OCI-LY7 (cell line): ENCODE measurements at regions of chr19 and their contacts with region 1.

Region 1: GRCh38 chr19:45079063-45079910 is at the start of gene GEMIN7:
- DNase-seq: peak; percentile 90
- H3K4me3 ChIP-seq: peak within 1 kb of the TSS; percentile 97
- H3K27ac ChIP-seq: peak within 1 kb of the TSS; percentile 88
- H3K4me1 ChIP-seq: peaks cover 43% of the 10 kb centered on the region
- CTCF ChIP-seq: no peak
- total RNA-seq, gene GEMIN7: 45.2 and 60.0 TPM in 2 replicates

Region 2: GRCh38 chr19:44752816-44753618 is 326.3 kb before region 1 on chr19:
- CTCF ChIA-PET with region 1: no interaction called
- POLR2A ChIA-PET with region 1: no interaction called
- intact Hi-C with region 1: loop called (anchors 5 kb)
- DNase-seq: peak; percentile 96
- H3K4me3 ChIP-seq: peak overlapping the region; percentile 84
- H3K27ac ChIP-seq: peak overlapping the region; percentile 95
- H3K4me1 ChIP-seq: peaks cover 60% of the 10 kb centered on the region
- CTCF ChIP-seq: 0 out of 2 replicates have a peak, but pooled peaks have one; percentile 20

Region 3: GRCh38 chr19:44968118-44968517 is 111.2 kb before region 1 on chr19:
- CTCF ChIA-PET with region 1: no interaction called
- POLR2A ChIA-PET with region 1: no interaction called
- intact Hi-C with region 1: no loop called
- DNase-seq: no peak
- H3K4me3 ChIP-seq: no peak overlapping the region
- H3K27ac ChIP-seq: no peak overlapping the region
- H3K4me1 ChIP-seq: no peaks in the 10 kb centered on the region
- CTCF ChIP-seq: no peak

Region 4: GRCh38 chr19:45001087-45001739 is 78.1 kb before region 1 on chr19 and contains the start of gene RELB:
- CTCF ChIA-PET with region 1: no interaction called
- POLR2A ChIA-PET with region 1: no interaction called
- intact Hi-C with region 1: loop called (anchors 5 kb)
- DNase-seq: peak; percentile 95
- H3K4me3 ChIP-seq: peak within 1 kb of the TSS; percentile 94
- H3K27ac ChIP-seq: peak within 1 kb of the TSS; percentile 96
- H3K4me1 ChIP-seq: peaks cover 67% of the 10 kb centered on the region
- CTCF ChIP-seq: no peak
- total RNA-seq, gene RELB: 36.4 and 36.9 TPM in 2 replicates

Region 5: GRCh38 chr19:45125926-45126493 is 46.7 kb after region 1 on chr19:
- CTCF ChIA-PET with region 1: no interaction called
- POLR2A ChIA-PET with region 1: no interaction called
- intact Hi-C with region 1: loop called (anchors 1 kb)
- DNase-seq: peak; percentile 74
- H3K4me3 ChIP-seq: no peak overlapping the region
- H3K27ac ChIP-seq: no peak overlapping the region
- H3K4me1 ChIP-seq: peaks cover 45% of the 10 kb centered on the region
- CTCF ChIP-seq: peak; percentile 85

Region 6: GRCh38 chr19:45137179-45137761 is 58.0 kb after region 1 on chr19:
- CTCF ChIA-PET with region 1: no interaction called
- POLR2A ChIA-PET with region 1: no interaction called
- intact Hi-C with region 1: loop called (anchors 2 kb)
- DNase-seq: peak; percentile 95
- H3K4me3 ChIP-seq: peak overlapping the region; percentile 61
- H3K27ac ChIP-seq: peak overlapping the region; percentile 98
- H3K4me1 ChIP-seq: peaks cover 70% of the 10 kb centered on the region
- CTCF ChIP-seq: no peak

Region 7: GRCh38 chr19:45178262-45179071 is 99.2 kb after region 1 on chr19 and contains the start of gene BLOC1S3:
- CTCF ChIA-PET with region 1: no interaction called
- POLR2A ChIA-PET with region 1: no interaction called
- intact Hi-C with region 1: loop called (anchors 1 kb)
- DNase-seq: peak; percentile 100
- H3K4me3 ChIP-seq: peak within 1 kb of the TSS; percentile 88
- H3K27ac ChIP-seq: peak within 1 kb of the TSS; percentile 66
- H3K4me1 ChIP-seq: peaks cover 25% of the 10 kb centered on the region
- CTCF ChIP-seq: peak; percentile 63
- total RNA-seq, gene BLOC1S3: 8.1 and 9.7 TPM in 2 replicates